AG04449 (cell line): ENCODE measurements at regions of chr10 and their contacts with region 1.

Region 1: DNA sequence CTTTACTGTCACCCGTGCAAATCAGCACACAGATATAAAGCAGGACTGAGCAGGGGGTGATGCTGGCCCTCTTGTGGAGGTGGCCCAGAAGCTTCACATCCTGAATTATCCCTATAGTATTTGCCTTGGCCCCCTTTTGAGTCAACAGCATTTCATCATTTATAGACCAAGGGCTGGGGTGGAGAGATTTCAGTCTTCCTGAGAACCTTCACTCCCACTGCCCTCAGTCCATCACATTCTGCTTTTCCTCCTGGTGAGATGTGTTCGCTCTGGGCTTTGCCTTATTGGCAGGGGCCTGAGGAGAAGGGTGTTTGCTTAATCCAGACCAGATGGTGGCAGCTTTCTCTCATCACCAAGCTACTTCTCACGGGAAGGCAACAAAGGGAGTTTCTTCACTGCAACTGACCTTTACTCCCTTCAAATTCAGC is 47.7 kb downstream of the NOC3L start:
- DNase-seq: no peak
- H3K4me3 ChIP-seq: no peak overlapping the region
- CTCF ChIP-seq: peak; percentile 14

Region 2: DNA sequence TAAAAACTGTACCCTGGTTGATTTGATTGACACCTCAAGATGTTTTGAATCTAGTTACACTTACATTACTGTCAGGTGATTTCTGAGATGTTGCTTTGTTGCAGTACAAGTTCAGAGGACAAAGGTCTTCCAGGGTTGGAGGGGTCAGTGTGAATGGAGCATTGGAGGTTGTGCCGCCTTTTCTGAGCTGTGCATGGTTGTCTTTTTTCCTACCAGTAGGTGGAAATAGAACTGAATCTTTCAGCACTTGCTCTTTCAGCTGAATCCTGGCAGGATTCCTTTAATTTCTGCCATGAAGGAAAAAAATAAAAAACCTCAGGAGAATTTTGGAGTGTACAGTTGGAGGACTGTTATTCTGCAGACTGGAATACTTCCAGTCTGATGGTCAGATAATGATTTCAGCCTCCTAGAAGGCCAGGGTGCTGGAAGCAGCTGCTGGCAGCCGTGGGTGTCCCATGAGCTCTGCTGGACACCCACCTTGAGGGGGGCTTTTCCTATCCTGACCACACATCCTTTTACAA is 238.7 kb before region 1 on chr10:
- CTCF ChIA-PET with region 1: interaction called, 71 read pairs
- POLR2A ChIA-PET with region 1: no interaction called
- DNase-seq: peak; percentile 44
- H3K4me3 ChIP-seq: no peak overlapping the region
- CTCF ChIP-seq: peak; percentile 62

Region 3: DNA sequence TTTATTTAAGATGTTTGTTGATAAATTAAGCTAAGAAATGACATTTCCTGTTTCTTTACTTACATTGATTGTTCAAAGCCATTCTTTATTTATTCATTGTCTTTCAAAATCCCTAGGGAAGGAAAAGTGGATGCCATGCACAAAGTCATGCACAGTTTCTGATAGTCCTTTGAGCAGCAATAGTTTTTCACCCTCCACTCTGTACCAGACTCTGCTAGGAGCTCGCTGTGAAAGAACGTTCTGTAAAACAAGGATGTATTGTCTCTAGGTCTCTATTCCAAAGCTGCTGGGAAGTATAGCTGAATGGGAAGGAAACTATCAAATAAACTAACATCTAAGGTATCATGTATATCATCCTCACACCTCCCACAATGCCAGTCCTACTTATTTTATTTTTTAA is 55.5 kb after region 1 on chr10:
- CTCF ChIA-PET with region 1: no interaction called
- POLR2A ChIA-PET with region 1: no interaction called
- DNase-seq: no peak
- H3K4me3 ChIP-seq: no peak overlapping the region
- CTCF ChIP-seq: no peak

Region 4: DNA sequence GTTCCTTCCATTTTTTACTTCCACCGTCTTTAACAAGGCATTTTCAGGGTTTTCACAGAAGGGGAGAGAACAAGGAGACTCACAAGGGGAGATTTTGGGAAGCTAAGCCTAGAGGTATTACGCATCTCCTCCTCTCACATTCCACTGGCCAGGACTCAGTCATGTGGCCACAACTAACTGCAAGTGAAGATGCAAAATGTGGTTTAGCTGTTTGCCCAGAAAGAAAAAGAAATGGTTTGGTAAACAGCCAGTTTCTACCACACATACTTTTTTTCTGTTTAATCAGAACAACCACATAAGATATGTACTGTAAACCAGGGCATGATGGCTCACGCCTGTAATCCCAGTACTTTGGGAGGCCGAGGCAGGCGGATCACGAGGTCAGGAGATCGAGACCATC is 209.1 kb after region 1 on chr10:
- CTCF ChIA-PET with region 1: no interaction called
- POLR2A ChIA-PET with region 1: no interaction called
- DNase-seq: peak; percentile 14
- H3K4me3 ChIP-seq: no peak overlapping the region
- CTCF ChIP-seq: no peak